ENCODE measurements at regions of chr1 and their contacts with region 1.

Region 1: DNA sequence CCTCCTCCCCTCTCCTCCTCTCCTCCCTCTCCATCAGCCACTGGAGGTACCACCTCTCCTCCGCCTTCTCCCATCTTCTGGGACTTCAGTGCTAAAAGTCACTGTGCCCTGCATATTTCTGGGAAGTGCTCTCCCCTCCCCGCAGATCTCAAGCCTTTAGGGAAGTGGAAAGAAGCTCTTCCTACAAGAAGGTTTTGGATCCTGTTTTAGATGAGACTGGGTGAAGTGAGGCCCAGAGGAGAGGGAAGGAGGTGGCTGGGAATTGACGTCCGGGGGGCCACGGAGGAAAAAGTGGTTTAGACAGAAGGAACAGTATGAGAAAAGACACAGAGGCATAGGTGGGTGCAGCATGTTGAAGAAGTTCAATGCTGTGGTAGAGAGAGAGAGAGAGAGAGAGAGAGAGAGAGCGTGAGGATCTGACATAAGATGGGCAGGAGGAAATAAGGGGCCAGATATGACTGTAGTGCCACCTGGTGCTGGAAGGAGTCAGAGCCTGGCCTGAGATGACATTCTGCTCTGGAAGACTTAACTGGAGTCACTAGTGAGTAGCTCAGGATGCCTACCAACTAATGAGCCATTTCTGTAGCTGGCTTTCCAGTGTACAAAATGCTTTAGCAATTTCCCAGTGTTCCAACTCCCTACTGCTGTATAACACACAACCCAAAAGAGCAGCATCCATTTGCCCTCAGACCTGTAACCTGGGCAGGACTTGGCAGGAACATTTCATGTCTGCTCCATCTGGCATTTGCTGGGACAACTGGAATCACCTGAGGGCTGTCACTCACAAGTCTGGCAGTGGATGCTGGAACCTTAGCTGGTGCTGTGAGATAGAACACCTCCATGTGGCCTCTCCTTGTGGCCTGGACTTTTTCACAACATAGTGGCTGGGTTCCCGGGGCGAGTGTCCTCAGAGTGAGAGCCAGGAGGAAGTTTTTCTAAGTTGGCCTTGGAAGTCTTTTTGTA is 16.6 kb upstream of the ZSCAN20 start:
- H3K4me3 ChIP-seq: no peak overlapping the region
- H3K27ac ChIP-seq: no peak overlapping the region
- H3K4me1 ChIP-seq: no peaks in the 10 kb centered on the region
- CTCF ChIP-seq: peak; percentile 91

Region 2: DNA sequence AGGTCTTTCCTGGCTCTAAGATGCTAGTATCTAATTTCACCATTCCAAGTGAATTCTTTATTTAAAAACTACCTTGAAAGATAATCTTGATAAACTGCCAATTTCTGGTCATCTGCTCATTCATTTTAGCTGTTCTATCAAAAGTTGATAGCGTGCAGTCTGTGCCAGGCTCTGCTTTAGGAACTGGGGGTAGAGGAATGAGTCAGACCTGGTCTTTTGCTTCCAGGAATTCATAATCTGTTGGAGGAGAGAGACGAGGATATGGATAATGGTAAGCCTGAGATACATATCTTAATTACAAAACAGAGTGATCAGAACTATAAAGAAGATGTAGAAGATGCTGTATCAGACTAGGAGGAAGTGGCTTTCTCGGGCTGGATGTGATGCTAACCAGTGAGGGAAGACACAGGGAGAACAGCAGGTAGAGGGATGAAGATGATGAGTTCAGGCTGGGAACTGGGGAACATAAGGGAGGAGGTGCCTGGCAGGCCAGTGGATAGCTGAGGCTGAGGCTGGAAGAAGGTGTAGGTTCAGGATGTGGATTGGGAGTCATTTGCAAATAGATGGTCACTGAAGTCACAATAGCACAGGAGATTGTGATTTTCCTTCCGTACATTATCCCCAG is 12.6 kb before region 1 on chr1:
- CTCF ChIA-PET with region 1: interaction called, 30 read pairs
- POLR2A ChIA-PET with region 1: interaction called, 8 read pairs
- H3K4me3 ChIP-seq: no peak overlapping the region
- H3K27ac ChIP-seq: no peak overlapping the region
- H3K4me1 ChIP-seq: no peaks in the 10 kb centered on the region
- CTCF ChIP-seq: no peak

Region 3: DNA sequence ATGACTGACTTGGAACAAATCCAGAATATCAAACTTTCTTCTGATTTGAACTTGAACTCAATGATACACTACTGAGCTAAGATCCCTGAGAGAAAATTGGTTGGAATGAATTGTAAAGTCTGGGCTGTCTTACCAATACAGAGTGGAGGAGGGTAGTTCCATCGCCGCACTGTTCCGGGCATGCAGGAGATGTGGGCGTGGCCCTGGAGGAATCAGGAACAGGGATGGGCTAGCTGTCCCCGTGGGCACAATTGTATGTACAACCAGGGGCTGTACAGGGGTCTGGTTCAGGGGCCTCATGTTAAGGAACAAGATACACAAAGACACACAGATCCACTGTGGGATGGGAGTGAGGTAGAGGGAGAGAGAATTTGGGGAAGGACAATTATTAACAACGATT is 161.0 kb after region 1 on chr1:
- CTCF ChIA-PET with region 1: interaction called, 16 read pairs
- POLR2A ChIA-PET with region 1: no interaction called
- H3K4me3 ChIP-seq: no peak overlapping the region
- H3K27ac ChIP-seq: no peak overlapping the region
- H3K4me1 ChIP-seq: no peaks in the 10 kb centered on the region
- CTCF ChIP-seq: no peak

Measured in HEK293 (cell line).